ENCODE measurements at regions of chr20 and their contacts with region 1.

Region 1: DNA sequence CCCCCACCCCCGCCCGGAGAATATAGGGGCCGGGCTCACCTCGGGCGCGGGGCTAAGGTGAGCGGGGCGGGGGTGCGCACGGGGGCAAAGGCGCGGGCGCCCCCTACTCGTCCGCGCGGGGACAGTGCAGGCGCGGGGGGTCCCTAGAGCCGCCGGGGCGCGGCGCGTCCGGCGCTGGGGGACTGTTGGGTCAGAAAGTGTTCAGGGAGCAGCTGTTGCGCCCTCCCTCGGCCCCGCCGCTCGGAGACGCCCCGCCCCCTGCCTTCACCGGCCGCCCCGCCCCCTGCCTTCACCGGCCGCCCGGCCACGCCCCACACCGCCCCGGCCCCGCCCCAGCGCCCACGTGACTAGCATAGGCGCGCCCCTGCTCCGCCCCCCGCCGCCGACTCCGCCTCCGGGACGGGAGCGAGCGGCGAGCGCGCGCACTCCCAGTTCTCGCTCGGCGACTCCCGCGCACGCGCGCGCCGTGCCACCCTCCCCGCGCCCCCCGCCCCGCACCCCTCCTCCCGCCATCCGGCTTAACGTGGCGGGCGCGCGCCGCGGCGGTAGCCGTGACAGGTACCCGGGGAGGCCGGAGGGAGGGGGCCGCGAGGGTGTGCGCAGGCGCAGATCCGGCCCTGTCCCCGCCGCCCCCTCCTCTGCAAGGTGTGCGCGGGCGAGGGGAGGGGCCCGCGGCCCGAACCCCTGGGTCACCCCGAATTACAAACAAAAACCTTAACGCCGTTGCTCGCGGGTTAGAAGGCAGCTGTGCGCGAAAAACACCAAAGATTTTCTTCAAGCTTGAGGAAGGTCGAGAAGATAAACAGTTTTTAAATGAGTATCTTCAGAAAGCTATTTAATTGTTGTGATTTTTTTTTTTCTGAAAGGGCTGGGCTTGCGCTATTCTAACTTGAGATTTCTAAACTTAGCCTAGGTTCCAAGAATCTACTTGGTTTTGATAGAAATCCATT is 704 bp upstream of the ZNF217 start:
- DNase-seq: peak; percentile 96
- H3K4me3 ChIP-seq: peak overlapping the region; percentile 100
- H3K27ac ChIP-seq: peak overlapping the region; percentile 95
- H3K4me1 ChIP-seq: peaks cover 30% of the 10 kb centered on the region
- CTCF ChIP-seq: peak; percentile 59

Region 2: DNA sequence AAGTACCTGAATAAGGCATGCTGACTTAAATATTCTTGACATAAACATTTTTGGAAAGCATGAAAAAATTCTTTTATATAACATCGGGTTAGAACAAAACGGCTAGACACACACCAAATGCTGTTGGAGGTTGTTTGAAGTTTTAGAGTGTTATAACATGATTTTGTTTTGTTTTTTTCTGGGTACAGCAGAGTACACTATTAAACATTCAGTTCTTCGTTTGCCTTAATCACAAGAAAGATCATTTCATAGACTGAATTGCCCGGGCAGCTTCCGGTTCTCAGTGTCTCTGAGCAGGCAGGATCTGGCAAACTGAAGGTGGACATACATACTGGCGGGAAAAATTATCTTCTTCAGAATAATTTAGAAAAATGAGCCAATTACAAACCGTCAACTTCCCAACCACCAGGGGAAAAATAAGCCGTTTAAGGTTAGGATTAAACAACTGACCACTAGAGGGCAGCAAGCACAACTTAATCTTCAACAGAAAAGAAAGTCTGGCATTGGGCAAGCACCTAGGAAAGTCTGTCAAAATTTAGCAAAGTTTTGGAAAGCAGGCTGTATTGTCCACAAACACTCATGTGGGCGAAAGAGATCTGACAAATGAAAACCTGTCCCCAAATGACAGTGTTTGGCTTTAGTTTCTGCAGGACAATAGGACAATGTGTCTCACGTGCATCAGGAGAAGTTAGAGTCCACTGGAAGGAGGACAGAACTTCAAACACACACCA is 15.7 kb before region 1 on chr20:
- CTCF ChIA-PET with region 1: no interaction called
- POLR2A ChIA-PET with region 1: interaction called, 9 read pairs
- intact Hi-C with region 1: loop called (anchors 1 kb)
- DNase-seq: peak; percentile 93
- H3K4me3 ChIP-seq: peak overlapping the region; percentile 68
- H3K27ac ChIP-seq: peak overlapping the region; percentile 96
- H3K4me1 ChIP-seq: peaks cover 58% of the 10 kb centered on the region
- CTCF ChIP-seq: peak; percentile 97

Region 3: GRCh38 chr20:53611449-53611894 is 17.1 kb after region 1 on chr20:
- CTCF ChIA-PET with region 1: no interaction called
- POLR2A ChIA-PET with region 1: interaction called, 20 read pairs
- intact Hi-C with region 1: no loop called
- DNase-seq: peak; percentile 34
- H3K4me3 ChIP-seq: peak overlapping the region; percentile 43
- H3K27ac ChIP-seq: peak overlapping the region; percentile 83
- H3K4me1 ChIP-seq: peaks cover 51% of the 10 kb centered on the region
- CTCF ChIP-seq: no peak

Region 4: DNA sequence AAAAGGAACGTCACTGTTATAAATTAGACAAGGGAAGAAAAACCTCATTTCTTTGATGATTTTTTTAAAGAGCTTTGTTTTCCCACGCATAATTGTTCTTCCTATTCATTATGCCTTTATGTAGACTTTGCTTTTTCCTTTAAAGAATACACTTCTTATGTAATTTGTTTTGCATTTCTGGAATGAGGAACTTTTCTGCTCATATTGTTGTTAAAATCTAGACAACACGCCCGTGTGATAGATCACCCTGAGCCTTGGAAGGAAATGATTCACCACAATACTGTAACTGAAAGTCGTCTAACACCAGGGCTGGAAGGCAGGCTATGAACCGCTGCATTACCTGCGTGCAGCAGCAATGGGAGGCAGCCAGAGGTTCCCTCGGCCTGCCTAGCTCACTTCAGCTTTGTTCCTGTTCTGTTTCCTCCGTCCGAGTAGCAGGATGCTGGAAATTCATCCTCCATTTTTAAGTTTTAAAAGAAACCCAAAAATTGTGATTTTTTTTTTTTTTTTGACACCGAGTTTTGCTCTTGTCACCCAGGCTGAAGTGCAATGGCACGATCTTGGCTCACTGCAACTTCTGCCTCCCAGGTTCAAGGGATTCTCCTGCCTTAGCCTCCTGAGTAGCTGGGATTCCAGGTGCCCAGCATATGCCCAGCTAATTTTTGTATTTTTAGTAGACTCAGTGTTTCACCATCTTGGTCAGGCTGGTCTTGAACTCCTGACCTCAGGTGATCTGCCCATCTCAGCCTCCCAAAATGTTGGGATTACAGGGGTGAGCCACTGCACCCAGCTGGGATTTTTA is 48.9 kb after region 1 on chr20:
- CTCF ChIA-PET with region 1: no interaction called
- POLR2A ChIA-PET with region 1: interaction called, 4 read pairs
- intact Hi-C with region 1: loop called (anchors 2 kb)
- DNase-seq: peak; percentile 80
- H3K4me3 ChIP-seq: peak overlapping the region; percentile 34
- H3K27ac ChIP-seq: peak overlapping the region; percentile 73
- H3K4me1 ChIP-seq: peaks cover 24% of the 10 kb centered on the region
- CTCF ChIP-seq: no peak

Region 5: GRCh38 chr20:53652090-53652858 is 57.9 kb after region 1 on chr20:
- CTCF ChIA-PET with region 1: no interaction called
- POLR2A ChIA-PET with region 1: interaction called, 5 read pairs
- intact Hi-C with region 1: loop called (anchors 2 kb)
- DNase-seq: peak; percentile 77
- H3K4me3 ChIP-seq: peak overlapping the region; percentile 50
- H3K27ac ChIP-seq: peak overlapping the region; percentile 91
- H3K4me1 ChIP-seq: peaks cover 59% of the 10 kb centered on the region
- CTCF ChIP-seq: no peak

Region 6: DNA sequence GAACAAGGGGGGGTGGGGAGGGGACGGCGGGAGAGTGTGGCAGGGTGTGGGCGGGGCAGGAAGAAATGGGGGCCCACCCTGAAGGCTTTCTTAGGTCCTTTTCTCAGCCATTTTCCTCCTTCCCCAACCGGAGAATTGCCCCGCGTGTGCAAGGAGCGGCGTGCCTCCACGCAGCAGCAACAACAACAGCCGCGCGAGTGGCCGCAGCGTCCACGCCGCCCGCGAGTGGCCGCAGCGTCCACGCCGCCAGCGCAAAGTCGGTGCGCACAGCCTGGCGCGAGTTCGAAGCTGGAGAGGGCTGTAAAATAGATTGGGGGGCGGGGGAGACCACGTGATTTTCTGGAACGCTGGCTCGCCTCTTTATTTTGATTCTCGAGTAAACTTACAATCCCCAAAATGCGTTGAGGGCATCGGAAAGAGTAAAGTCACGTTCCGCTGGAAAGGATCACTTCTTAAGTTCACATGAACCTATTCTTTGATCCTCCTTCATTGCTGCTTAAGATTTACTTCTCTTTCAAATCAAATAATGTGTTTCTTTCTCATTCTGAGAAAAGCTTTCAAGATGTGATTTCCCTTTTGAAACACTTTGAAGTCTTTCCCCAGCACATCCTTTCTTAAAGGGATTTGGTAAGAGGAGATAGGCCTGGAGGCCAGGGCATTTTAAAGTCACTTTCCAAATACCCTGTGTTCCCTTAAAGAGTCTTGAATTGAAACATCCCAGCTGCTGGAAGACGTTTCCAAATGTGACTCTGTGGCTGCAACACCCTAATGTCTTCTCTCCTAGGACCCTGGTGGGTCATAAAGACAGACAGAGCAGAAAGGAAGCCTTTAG is 66.0 kb after region 1 on chr20:
- CTCF ChIA-PET with region 1: no interaction called
- POLR2A ChIA-PET with region 1: interaction called, 3 read pairs
- intact Hi-C with region 1: loop called (anchors 2 kb)
- DNase-seq: peak; percentile 41
- H3K4me3 ChIP-seq: peak overlapping the region; percentile 57
- H3K27ac ChIP-seq: peak overlapping the region; percentile 67
- H3K4me1 ChIP-seq: peaks cover 70% of the 10 kb centered on the region
- CTCF ChIP-seq: no peak

Region 7: GRCh38 chr20:53828682-53829254 is 234.4 kb after region 1 on chr20:
- CTCF ChIA-PET with region 1: no interaction called
- POLR2A ChIA-PET with region 1: no interaction called
- intact Hi-C with region 1: loop called (anchors 5 kb)
- DNase-seq: peak; percentile 50
- H3K4me3 ChIP-seq: peak overlapping the region; percentile 60
- H3K27ac ChIP-seq: peak overlapping the region; percentile 89
- H3K4me1 ChIP-seq: peaks cover 73% of the 10 kb centered on the region
- CTCF ChIP-seq: no peak; the same call in 1 of the 2 replicates

Measured in OCI-LY7 (cell line).